Right cardiac atrium (tissue), 5 donors: ENCODE measurements at regions of chr3 and their contacts with region 1.

Region 1: GRCh38 chr3:70753597-70753996 is 441.2 kb upstream of the MDFIC2 start:
- DNase-seq: no peak
- ATAC-seq: no peak
- H3K4me3 ChIP-seq: no peak overlapping the region
- H3K27ac ChIP-seq: no peak overlapping the region
- H3K4me1 ChIP-seq: no peaks in the 10 kb centered on the region
- H3K27me3 ChIP-seq: no peaks in the 10 kb centered on the region

Region 2: GRCh38 chr3:70933105-70933810 is 179.7 kb after region 1 on chr3:
- intact Hi-C with region 1: loop called in 1 of 4 experiments (anchors 10 kb)
- DNase-seq: no peak
- ATAC-seq: no peak
- H3K4me3 ChIP-seq: no peak overlapping the region
- H3K27ac ChIP-seq: no peak overlapping the region
- H3K4me1 ChIP-seq: no peaks in the 10 kb centered on the region
- H3K27me3 ChIP-seq: no peaks in the 10 kb centered on the region